Activated CD4-positive, alpha-beta T cell treated with anti-CD3 and anti-CD28 coated beads for 36 hours (primary cell): ENCODE measurements at regions of chr11 and their contacts with region 1.

Region 1: DNA sequence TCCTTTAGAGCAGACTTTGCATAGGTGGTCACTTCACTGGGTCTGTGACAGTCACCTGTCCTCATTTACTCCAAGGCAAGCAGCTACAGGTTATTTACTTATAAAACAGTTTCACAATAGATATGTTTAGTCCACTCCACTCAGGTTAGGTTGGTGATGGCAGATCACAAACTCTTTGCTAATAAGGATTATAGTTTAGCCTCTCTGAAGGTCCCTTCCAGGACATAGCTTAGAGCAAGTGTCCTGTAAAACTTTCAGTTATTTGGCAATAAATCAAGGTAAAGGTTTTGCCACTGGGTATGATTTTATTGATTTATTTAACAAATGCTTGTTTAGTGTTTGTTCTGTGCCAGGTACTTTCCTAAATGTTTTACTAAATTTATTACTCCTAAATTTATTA is 8.8 kb downstream of the OR6Q1 start:
- DNase-seq: no peak
- ATAC-seq: no peak
- H3K4me3 Mint-ChIP-seq: no peak overlapping the region
- H3K27ac Mint-ChIP-seq: no peak overlapping the region
- H3K4me1 Mint-ChIP-seq: no peaks in the 10 kb centered on the region
- H3K27me3 Mint-ChIP-seq: no peaks in the 10 kb centered on the region

Region 2: GRCh38 chr11:57049749-57050148 is 989.8 kb before region 1 on chr11:
- CTCF ChIA-PET with region 1: no interaction called
- POLR2A ChIA-PET with region 1: no interaction called
- intact Hi-C with region 1: loop called in 1 of 2 experiments (anchors 5 kb)
- DNase-seq: no peak
- ATAC-seq: no peak
- H3K4me3 Mint-ChIP-seq: no peak overlapping the region
- H3K27ac Mint-ChIP-seq: no peak overlapping the region
- H3K4me1 Mint-ChIP-seq: no peaks in the 10 kb centered on the region
- H3K27me3 Mint-ChIP-seq: no peaks in the 10 kb centered on the region

Region 3: DNA sequence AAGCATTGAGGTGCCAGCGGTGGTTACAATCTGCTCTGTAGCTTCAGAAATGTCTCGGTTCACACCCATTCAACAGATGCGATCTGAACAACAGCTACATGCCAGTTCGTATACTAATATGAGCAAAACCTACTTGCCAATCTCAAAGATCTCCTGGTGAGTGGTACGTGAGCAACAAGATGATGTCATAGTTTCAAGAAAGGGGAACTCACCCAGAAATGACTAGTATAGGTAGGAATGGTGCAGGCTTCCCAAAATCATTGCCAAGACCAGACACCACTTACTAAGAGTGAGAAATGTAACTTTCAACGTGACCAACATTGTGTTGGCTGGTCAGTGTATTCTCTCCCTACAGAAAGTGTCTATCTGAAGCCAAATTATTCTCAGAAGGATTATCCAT is 22.2 kb after region 1 on chr11:
- CTCF ChIA-PET with region 1: no interaction called
- POLR2A ChIA-PET with region 1: no interaction called
- intact Hi-C with region 1: no loop called
- DNase-seq: no peak
- ATAC-seq: peak; percentile 19
- H3K4me3 Mint-ChIP-seq: no peak overlapping the region
- H3K27ac Mint-ChIP-seq: no peak overlapping the region
- H3K4me1 Mint-ChIP-seq: no peaks in the 10 kb centered on the region
- H3K27me3 Mint-ChIP-seq: peaks cover 2% of the 10 kb centered on the region

Region 4: GRCh38 chr11:58086528-58086927 is 46.9 kb after region 1 on chr11:
- CTCF ChIA-PET with region 1: no interaction called
- POLR2A ChIA-PET with region 1: no interaction called
- intact Hi-C with region 1: loop called in 1 of 2 experiments (anchors 10 kb)
- DNase-seq: no peak
- ATAC-seq: no peak
- H3K4me3 Mint-ChIP-seq: no peak overlapping the region
- H3K27ac Mint-ChIP-seq: no peak overlapping the region
- H3K4me1 Mint-ChIP-seq: no peaks in the 10 kb centered on the region
- H3K27me3 Mint-ChIP-seq: peaks cover 11% of the 10 kb centered on the region